ENCODE measurements at regions of chr9 and their contacts with region 1.

Region 1: DNA sequence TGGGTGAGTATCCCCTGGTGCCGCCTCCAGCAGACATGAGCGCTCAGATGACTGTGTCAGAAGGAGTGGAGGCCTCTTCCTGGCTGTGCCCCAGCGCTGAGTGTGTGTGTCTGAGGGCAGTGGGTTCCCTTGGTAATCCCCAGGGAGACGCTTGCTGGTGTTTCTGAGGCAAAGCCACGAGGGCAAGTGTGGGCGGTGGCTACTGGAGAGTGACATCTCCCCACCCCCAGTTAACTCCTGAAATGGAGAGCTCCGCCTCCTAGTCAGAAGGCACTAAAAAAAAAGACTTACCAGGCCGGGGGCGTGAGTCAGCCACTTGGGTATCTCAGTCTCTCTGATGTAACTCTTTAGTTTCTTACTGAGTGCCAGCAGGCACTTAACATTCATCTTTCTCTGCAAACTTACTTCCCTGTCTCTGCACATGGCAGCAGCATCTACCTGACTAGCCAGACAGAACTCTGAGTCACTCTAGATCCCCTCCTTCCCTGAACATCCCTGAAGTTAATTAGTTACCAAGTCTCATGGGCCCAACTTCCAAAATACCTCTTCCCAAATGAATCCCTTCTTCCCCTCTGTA is 19.3 kb downstream of the ORM2 start:
- DNase-seq: peak; percentile 95
- H3K4me3 ChIP-seq: no peak overlapping the region
- H3K27ac ChIP-seq: peak overlapping the region; percentile 59 to 73 (median 67)
- H3K4me1 ChIP-seq: peaks cover 3 to 41% (median 21%) of the 10 kb centered on the region in 4 donors
- H3K27me3 ChIP-seq: no peaks in the 10 kb centered on the region
- CTCF ChIP-seq: no peak
- EP300 ChIP-seq: no peak
- POLR2A ChIP-seq: no peak

Region 2: GRCh38 chr9:113523421-113524236 is 825.4 kb before region 1 on chr9:
- intact Hi-C with region 1: no loop called
- DNase-seq: no peak
- H3K4me3 ChIP-seq: peak overlapping the region in 1 of 4 donors; percentile 7
- H3K27ac ChIP-seq: peak overlapping the region; percentile 67 to 83 (median 70)
- H3K4me1 ChIP-seq: peaks cover 77 to 100% (median 89%) of the 10 kb centered on the region in 4 donors
- H3K27me3 ChIP-seq: no peaks in the 10 kb centered on the region
- CTCF ChIP-seq: no peak
- EP300 ChIP-seq: no peak
- POLR2A ChIP-seq: no peak

Region 3: GRCh38 chr9:114385412-114386181 is 36.6 kb after region 1 on chr9:
- intact Hi-C with region 1: loop called (anchors 5 kb)
- DNase-seq: no peak
- H3K4me3 ChIP-seq: peak overlapping the region; percentile 62 to 67 (median 64)
- H3K27ac ChIP-seq: peak overlapping the region; percentile 83 to 90 (median 86)
- H3K4me1 ChIP-seq: peaks cover 57 to 86% (median 84%) of the 10 kb centered on the region in 4 donors
- H3K27me3 ChIP-seq: no peaks in the 10 kb centered on the region
- CTCF ChIP-seq: no peak
- EP300 ChIP-seq: no peak
- POLR2A ChIP-seq: no peak

Measured in esophagus muscularis mucosa (tissue), 4 donors.